Right ventricle myocardium superior (tissue), 1 donor: ENCODE measurements at regions of chr12 and their contacts with region 1.

Region 1: DNA sequence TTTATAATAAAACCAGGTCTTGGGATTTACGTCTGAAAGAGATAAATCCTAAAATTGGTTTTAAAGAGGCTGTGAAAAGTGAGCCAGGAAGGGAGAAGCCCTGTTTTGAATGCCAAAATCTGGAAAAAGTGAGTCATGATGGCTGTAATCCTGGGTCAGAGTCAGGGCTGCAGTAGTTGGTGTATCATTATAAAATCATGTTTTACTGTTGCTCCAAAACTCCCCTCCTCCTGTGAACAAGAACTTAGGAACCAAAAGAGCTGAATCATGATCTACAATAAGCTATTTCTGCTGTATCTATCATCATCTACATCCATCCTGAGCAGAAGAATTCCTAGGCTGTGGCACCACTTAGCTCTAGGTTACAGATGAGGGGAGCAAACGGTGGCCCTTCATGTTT is 79.3 kb downstream of the LMO3 start:
- DNase-seq: no peak
- ATAC-seq: peak; percentile 20

Region 2: DNA sequence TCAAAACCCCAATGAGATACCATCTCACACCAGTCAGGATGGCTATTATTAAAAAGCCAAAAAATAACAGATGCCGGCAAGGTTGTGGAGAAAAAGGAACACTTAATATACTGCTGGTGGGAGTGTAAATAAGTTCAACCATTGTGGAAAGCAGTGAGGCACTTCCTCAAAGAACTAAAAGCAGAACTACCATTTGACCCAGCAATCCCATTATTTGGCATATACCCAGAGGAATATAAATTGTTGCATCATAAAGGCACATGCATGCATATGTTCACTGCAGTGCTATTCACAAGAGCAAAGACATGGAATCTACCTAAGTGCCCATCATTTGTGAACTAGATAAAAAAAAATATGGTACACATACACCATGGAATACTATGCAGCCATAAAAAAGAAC is 119.3 kb before region 1 on chr12:
- intact Hi-C with region 1: no loop called
- DNase-seq: no peak
- ATAC-seq: no peak

Region 3: GRCh38 chr12:16789204-16789790 is 262.6 kb after region 1 on chr12:
- intact Hi-C with region 1: loop called (anchors 5 kb)
- DNase-seq: no peak
- ATAC-seq: no peak